GM12878 (cell line): ENCODE measurements at regions of chr7 and their contacts with region 1.

Region 1: DNA sequence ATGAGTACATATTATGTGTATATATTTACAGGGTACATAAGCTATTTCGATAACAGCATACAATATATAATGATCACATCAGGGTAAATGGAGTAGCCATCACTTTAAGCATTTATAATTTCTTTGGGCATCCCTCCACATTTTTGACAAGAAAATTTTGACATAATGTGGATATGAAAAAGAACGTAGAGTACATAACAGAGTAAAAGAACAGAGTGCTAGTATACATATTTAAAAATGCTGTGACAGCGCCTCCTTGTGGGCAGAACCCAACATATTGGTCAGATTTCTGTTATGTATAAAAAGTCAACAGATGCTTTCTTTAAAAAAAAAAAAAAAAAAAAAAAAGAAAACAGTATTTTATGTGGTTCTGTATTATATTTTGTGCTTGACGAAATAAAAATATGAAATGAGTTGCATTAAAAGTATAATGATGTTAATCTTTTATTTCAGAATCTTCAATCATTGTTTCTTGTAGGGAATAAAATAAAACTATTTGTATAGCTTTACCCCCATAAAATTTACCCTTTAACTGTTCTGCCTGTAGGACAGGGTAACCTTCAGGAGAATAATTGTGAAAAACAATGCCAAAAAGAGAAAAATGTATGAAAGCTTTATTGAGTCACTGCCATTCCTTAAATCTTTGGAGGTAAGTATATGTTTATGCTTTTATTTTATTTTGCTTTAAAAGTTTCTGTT is 18.3 kb upstream of the HBP1 start:
- DNase-seq: no peak
- ATAC-seq: peak; percentile 85
- H3K4me3 ChIP-seq: no peak overlapping the region
- H3K27ac ChIP-seq: no peak overlapping the region
- H3K4me1 ChIP-seq: no peaks in the 10 kb centered on the region
- H3K27me3 ChIP-seq: no peaks in the 10 kb centered on the region; a peak in 2 of 4 replicates
- CTCF ChIP-seq: peak; percentile 45 to 59 (median 47); a peak in 5 of 6 replicates
- EP300 ChIP-seq: no peak
- POLR2A ChIP-seq: no peak
- RAD21 ChIP-seq: peak; percentile 69

Region 2: DNA sequence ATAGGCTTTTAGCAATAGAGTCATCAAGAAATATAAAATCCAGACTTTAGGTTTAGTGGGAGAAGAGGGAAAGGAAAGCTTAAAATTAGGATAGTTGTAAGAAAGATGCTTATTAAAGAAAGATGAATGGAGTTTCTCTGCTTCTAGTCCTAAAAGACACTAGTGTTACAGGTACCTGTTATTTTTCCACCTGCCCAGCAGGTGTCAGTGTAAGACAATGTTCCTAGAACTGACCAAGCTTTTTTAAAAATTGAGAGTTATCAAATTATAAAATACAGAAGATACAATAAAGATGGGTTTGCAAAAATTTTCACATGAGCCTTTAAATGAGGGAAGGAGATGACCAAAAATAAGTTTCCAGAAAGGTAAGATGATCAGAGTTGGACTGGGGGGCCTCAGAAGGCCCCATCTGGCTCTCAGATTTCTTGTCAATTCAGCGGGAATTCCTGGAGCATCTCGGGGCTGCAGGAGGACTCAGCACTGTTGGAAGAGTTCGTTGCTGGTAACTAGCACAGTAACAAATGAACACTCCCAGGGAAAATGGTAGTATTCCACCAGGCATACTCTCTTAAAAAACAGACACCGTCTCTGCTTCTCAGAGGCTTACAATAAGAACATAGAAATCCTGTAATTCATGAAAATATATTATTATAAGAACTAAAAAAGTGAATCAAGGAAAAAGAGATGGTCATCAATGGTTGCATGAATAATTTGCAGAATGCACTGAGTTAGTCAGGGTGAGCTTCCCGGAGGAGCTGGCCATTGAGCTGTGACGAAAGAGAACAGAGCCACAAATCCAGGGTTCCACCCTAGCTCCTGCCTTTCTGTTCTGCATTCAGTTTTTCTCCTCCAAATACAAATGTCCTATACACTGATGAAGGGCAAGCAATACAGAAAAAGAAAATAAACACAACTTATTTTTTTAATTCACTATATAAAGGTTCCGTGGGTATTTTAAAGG is 357.2 kb before region 1 on chr7:
- CTCF ChIA-PET with region 1: interaction called, 203 read pairs
- POLR2A ChIA-PET with region 1: no interaction called
- RAD21 ChIA-PET with region 1: interaction called, 47 read pairs
- SMC1A ChIA-PET with region 1: interaction called, 142 read pairs
- in situ Hi-C with region 1: loop called (anchors 5 kb)
- intact Hi-C with region 1: loop called (anchors 1 kb)
- DNase-seq: no peak
- ATAC-seq: peak; percentile 35; the same call in 1 of the 3 replicates
- H3K4me3 ChIP-seq: no peak overlapping the region
- H3K27ac ChIP-seq: no peak overlapping the region
- H3K4me1 ChIP-seq: peaks cover 11% of the 10 kb centered on the region
- H3K27me3 ChIP-seq: no peaks in the 10 kb centered on the region; a peak in 1 of 4 replicates
- CTCF ChIP-seq: peak; percentile 51 to 66 (median 61); a peak in 5 of 6 replicates
- EP300 ChIP-seq: no peak
- POLR2A ChIP-seq: no peak
- RAD21 ChIP-seq: peak; percentile 94

Region 3: DNA sequence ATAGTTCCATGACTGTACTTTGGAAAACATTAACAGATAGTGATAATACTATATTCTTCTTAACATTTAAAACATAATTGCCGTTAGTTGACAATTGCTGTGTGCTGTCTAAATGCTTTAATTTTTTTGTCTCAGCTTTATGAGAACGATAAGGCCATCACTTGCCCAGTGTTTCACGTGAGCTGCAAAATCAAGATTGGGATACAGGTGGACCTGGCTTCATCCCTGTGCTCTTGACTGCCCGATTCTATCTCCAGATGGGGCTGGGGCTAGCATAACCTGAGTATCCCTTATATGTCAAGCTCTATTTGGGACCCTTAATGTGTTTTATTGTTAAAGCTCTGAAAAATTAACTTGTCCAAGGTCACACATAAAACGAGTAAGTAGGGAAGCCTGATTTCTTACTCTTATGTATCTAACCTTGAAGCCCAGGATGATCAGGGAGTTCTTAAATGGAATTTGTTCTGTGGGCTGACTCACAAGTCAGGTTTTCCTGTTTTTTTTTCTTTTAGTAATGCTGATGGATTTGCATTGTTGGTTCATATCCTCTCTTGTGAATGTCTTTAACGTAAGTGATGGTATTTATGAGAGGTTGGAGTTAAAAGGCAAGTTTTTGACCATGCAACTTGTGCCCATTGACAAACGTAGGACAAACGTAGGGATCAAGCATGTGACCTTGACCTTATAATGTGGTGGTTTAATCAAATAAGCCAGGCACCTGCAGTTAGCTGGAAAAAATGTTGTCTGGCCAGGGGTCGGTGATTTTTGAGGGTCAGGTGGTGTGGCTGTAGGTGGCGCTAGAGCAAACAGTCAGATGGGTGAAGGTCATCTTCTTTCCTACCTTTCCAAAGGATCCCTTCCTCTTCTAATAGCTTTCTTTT is 102.4 kb before region 1 on chr7:
- CTCF ChIA-PET with region 1: interaction called, 20 read pairs
- POLR2A ChIA-PET with region 1: no interaction called
- RAD21 ChIA-PET with region 1: no interaction called
- SMC1A ChIA-PET with region 1: interaction called, 3 read pairs
- in situ Hi-C with region 1: no loop called
- intact Hi-C with region 1: no loop called
- DNase-seq: no peak
- ATAC-seq: no peak
- H3K4me3 ChIP-seq: no peak overlapping the region
- H3K27ac ChIP-seq: no peak overlapping the region
- H3K4me1 ChIP-seq: no peaks in the 10 kb centered on the region
- H3K27me3 ChIP-seq: peaks cover 4 to 12% of the 10 kb centered on the region in 2 experiments; a peak in 3 of 4 replicates
- CTCF ChIP-seq: peak in 2 of 3 experiments; percentile 17 to 19; a peak in 2 of 6 replicates
- EP300 ChIP-seq: no peak
- POLR2A ChIP-seq: no peak
- RAD21 ChIP-seq: no peak

Region 4: DNA sequence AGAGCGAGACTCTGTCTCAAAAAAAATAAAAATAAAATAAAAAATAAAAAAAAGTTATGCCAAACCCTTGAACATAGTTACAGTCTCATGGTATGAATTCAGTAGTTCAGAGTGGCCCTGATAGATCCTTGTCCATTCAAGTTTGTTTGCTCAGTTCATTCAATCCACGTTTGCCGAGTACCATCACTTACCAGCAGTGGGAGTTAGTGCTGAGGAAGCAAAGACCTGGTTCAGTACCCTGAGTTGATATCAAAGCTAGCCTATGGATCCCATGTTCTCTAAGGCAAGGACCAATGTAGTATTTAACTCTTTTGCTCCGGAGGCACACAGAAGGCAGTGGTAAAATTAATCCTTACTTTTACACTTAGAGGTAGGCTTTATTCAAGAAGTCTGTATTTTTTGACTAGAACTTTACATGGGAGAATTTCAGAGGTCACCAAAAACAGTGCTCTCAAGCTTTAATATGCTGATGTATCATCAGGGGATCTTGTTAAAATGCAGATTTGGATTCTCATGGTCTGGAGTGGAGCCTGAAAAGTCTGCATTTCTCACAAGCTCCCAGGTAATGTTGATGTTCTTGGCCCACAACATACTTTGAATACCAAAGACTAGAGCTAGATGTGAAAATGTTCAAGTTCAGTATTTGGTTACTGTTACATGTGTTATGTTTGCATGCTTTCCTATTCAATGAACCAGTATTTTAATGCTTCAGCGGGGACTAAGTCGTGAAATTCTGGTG is 19.9 kb before region 1 on chr7:
- CTCF ChIA-PET with region 1: interaction called, 101 read pairs
- POLR2A ChIA-PET with region 1: no interaction called
- RAD21 ChIA-PET with region 1: interaction called, 6 read pairs
- SMC1A ChIA-PET with region 1: interaction called, 8 read pairs
- in situ Hi-C with region 1: no loop called
- intact Hi-C with region 1: no loop called
- DNase-seq: no peak
- ATAC-seq: no peak
- H3K4me3 ChIP-seq: no peak overlapping the region
- H3K27ac ChIP-seq: no peak overlapping the region
- H3K4me1 ChIP-seq: peaks cover 6% of the 10 kb centered on the region
- H3K27me3 ChIP-seq: no peaks in the 10 kb centered on the region
- CTCF ChIP-seq: no peak
- EP300 ChIP-seq: no peak
- POLR2A ChIP-seq: no peak
- RAD21 ChIP-seq: no peak

Region 5: GRCh38 chr7:107501593-107501992 is 351.1 kb after region 1 on chr7:
- CTCF ChIA-PET with region 1: interaction called, 17 read pairs
- POLR2A ChIA-PET with region 1: no interaction called
- RAD21 ChIA-PET with region 1: interaction called, 7 read pairs
- SMC1A ChIA-PET with region 1: interaction called, 9 read pairs
- in situ Hi-C with region 1: no loop called
- intact Hi-C with region 1: loop called (anchors 5 kb)
- DNase-seq: no peak
- ATAC-seq: peak; percentile 76
- H3K4me3 ChIP-seq: no peak overlapping the region
- H3K27ac ChIP-seq: no peak overlapping the region
- H3K4me1 ChIP-seq: no peaks in the 10 kb centered on the region
- H3K27me3 ChIP-seq: no peaks in the 10 kb centered on the region
- CTCF ChIP-seq: peak; percentile 36 to 62 (median 49); a peak in 4 of 6 replicates
- EP300 ChIP-seq: no peak
- POLR2A ChIP-seq: no peak
- RAD21 ChIP-seq: peak; percentile 71